Activated CD8-positive, alpha-beta T cell treated with anti-CD3 and anti-CD28 coated beads for 36 hours (primary cell): ENCODE measurements at regions of chr11 and their contacts with region 1.

Region 1: DNA sequence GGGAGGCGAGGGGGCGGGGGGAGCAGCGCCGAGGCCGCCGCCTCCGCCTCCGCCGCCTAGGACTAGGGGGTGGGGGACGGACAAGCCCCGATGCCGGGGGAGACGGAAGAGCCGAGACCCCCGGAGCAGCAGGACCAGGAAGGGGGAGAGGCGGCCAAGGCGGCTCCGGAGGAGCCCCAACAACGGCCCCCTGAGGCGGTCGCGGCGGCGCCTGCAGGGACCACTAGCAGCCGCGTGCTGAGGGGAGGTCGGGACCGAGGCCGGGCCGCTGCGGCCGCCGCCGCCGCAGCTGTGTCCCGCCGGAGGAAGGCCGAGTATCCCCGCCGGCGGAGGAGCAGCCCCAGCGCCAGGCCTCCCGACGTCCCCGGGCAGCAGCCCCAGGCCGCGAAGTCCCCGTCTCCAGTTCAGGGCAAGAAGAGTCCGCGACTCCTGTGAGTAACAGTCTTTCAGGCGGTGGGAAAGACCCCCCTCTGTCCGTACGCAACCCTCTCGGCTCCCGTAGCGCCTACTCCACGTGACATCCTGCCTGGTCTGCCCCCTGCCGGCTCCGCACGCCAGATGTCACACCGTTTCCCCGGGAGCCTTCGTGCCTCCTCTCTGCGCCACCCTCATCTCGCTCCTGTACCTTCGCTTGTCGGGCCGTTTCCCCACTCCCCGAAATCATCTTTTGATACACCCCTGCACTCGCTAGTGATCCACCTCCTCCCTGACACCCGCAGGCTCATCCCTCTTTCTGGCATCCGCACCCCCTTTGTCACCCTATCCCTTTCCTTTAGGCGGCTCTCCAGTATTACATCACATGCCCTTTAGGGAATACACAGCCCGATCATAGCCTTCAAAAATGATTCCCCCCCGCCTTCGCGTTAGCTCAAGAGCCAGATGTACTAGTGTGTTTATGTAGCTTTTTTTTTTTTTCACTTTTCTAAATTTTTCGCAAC is 598 bp downstream of the ZFP91 start:
- DNase-seq: peak; percentile 96
- ATAC-seq: peak; percentile 29
- H3K4me3 Mint-ChIP-seq: peak overlapping the region; percentile 93
- H3K27ac Mint-ChIP-seq: peak overlapping the region; percentile 100
- H3K4me1 Mint-ChIP-seq: peaks cover 36% of the 10 kb centered on the region
- H3K27me3 Mint-ChIP-seq: no peaks in the 10 kb centered on the region
- CTCF ChIP-seq: peak; percentile 67

Region 2: DNA sequence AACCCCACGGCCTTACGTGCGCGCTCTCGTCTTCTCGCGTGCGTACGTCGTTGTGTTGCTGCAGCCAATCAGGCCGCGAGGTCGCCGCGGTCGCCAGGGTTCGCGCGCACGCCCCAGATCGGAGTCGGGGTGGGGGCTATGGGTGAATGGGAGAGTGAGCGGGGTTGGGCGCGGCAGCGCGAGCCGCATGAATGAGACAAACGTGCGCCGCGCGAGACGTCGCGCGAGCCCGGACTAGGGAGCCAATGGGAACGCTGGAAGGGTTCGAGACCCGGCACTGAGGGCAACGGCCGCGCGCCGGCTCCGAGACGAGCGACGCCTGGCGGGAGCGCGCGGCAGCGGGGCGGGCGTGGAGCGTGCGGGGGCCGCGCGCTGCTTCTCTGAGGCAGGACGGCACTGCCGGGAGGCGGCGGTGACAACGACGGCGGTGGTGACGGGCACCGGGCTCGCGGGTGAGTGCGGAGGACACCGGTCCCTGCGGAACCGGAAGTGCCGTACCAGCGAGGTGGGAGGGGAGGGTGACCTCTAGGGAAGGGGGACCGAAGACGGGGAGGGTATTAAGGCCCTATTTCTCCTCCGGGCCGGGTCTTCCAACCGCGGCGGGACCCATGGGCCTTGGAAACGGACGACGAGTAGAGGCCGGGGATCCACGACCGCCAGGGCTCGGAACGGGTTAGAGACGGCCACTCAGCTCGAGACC is 911.6 kb before region 1 on chr11 and contains the start of gene ZDHHC5:
- CTCF ChIA-PET with region 1: no interaction called
- POLR2A ChIA-PET with region 1: interaction called, 3 read pairs
- intact Hi-C with region 1: loop called (anchors 10 kb)
- DNase-seq: peak; percentile 99
- ATAC-seq: peak; percentile 86
- H3K4me3 Mint-ChIP-seq: peak within 1 kb of the TSS; percentile 95
- H3K27ac Mint-ChIP-seq: peak within 1 kb of the TSS; percentile 99
- H3K4me1 Mint-ChIP-seq: peaks cover 36% of the 10 kb centered on the region
- H3K27me3 Mint-ChIP-seq: no peaks in the 10 kb centered on the region
- CTCF ChIP-seq: peak; percentile 26
- total RNA-seq, gene ZDHHC5: 53.7 to 54.8 TPM

Region 3: GRCh38 chr11:58513747-58514367 is 65.6 kb before region 1 on chr11:
- CTCF ChIA-PET with region 1: no interaction called
- POLR2A ChIA-PET with region 1: no interaction called
- intact Hi-C with region 1: no loop called
- DNase-seq: peak; percentile 35
- ATAC-seq: peak; percentile 58
- H3K4me3 Mint-ChIP-seq: no peak overlapping the region
- H3K27ac Mint-ChIP-seq: no peak overlapping the region
- H3K4me1 Mint-ChIP-seq: no peaks in the 10 kb centered on the region
- H3K27me3 Mint-ChIP-seq: no peaks in the 10 kb centered on the region
- CTCF ChIP-seq: peak; percentile 47

Region 4: DNA sequence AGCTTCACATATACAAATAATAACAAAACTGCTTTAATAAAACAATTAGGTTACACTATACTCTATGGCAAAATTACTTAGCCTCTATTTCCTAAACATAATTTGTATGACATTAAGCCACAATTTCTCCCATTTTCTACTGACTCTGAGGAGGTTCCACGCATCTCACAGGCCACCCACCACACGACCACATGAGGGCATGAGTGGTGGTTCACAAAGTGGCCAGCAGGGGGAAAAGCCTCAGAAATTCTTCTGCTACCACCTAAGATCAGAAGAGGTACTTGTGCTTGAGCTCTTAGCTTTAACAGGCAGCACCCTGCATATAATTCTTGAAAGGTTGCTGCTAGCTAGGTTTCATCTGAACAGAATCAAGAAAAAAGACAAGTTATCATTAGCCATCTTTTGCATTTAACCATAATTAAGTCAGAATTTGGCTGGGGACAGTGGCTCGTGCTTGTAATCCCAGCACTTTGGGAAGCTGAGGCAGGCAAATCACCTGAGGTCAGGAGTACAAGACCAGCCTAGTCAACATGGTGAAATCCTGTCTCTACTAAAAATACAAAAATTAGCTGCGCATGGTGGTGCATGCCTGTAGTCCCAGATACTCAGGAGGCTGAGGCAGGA is 11.5 kb before region 1 on chr11:
- CTCF ChIA-PET with region 1: interaction called, 31 read pairs
- POLR2A ChIA-PET with region 1: interaction called, 69 read pairs
- intact Hi-C with region 1: no loop called
- DNase-seq: peak; percentile 89
- ATAC-seq: peak; percentile 97
- H3K4me3 Mint-ChIP-seq: peak overlapping the region; percentile 39
- H3K27ac Mint-ChIP-seq: peak overlapping the region; percentile 90
- H3K4me1 Mint-ChIP-seq: peaks cover 64% of the 10 kb centered on the region
- H3K27me3 Mint-ChIP-seq: no peaks in the 10 kb centered on the region
- CTCF ChIP-seq: peak; percentile 73

Region 5: GRCh38 chr11:58609723-58610122 is 30.3 kb after region 1 on chr11:
- CTCF ChIA-PET with region 1: interaction called, 8 read pairs
- POLR2A ChIA-PET with region 1: interaction called, 11 read pairs
- intact Hi-C with region 1: no loop called
- DNase-seq: no peak
- ATAC-seq: no peak
- H3K4me3 Mint-ChIP-seq: no peak overlapping the region
- H3K27ac Mint-ChIP-seq: no peak overlapping the region
- H3K4me1 Mint-ChIP-seq: peaks cover 54% of the 10 kb centered on the region
- H3K27me3 Mint-ChIP-seq: no peaks in the 10 kb centered on the region
- CTCF ChIP-seq: no peak

Region 6: DNA sequence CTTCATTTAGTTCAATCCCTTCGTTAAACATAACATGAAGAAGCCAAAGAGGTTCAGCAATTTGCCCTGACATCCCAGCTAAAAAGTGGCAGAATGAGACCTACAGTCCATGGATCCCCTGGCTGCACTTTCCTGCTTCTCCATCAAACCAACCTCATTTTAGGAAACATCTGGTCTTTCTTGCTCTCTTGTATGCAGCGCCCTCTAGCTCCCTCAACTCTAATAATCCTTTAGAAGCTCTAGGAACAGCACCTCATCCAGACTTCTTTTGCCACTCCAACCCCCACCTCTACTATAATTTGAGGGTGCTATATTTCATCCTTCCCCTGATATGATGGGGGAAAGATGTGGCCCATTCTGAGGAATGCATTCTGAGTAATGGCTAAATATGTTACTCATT is 50.4 kb after region 1 on chr11:
- CTCF ChIA-PET with region 1: interaction called, 30 read pairs
- POLR2A ChIA-PET with region 1: interaction called, 7 read pairs
- intact Hi-C with region 1: no loop called
- DNase-seq: peak; percentile 45
- ATAC-seq: peak; percentile 70
- H3K4me3 Mint-ChIP-seq: no peak overlapping the region
- H3K27ac Mint-ChIP-seq: peak overlapping the region; percentile 18
- H3K4me1 Mint-ChIP-seq: peaks cover 9% of the 10 kb centered on the region
- H3K27me3 Mint-ChIP-seq: no peaks in the 10 kb centered on the region
- CTCF ChIP-seq: peak; percentile 43

Region 7: GRCh38 chr11:58788355-58789023 is 209.0 kb after region 1 on chr11:
- CTCF ChIA-PET with region 1: no interaction called
- POLR2A ChIA-PET with region 1: no interaction called
- intact Hi-C with region 1: loop called (anchors 5 kb)
- DNase-seq: peak; percentile 31
- ATAC-seq: peak; percentile 98
- H3K4me3 Mint-ChIP-seq: no peak overlapping the region
- H3K27ac Mint-ChIP-seq: no peak overlapping the region
- H3K4me1 Mint-ChIP-seq: peaks cover 2% of the 10 kb centered on the region
- H3K27me3 Mint-ChIP-seq: peaks cover 5% of the 10 kb centered on the region
- CTCF ChIP-seq: peak; percentile 86